Ascending aorta (tissue), 2 donors: ENCODE measurements at regions of chr4 and their contacts with region 1.

Region 1: DNA sequence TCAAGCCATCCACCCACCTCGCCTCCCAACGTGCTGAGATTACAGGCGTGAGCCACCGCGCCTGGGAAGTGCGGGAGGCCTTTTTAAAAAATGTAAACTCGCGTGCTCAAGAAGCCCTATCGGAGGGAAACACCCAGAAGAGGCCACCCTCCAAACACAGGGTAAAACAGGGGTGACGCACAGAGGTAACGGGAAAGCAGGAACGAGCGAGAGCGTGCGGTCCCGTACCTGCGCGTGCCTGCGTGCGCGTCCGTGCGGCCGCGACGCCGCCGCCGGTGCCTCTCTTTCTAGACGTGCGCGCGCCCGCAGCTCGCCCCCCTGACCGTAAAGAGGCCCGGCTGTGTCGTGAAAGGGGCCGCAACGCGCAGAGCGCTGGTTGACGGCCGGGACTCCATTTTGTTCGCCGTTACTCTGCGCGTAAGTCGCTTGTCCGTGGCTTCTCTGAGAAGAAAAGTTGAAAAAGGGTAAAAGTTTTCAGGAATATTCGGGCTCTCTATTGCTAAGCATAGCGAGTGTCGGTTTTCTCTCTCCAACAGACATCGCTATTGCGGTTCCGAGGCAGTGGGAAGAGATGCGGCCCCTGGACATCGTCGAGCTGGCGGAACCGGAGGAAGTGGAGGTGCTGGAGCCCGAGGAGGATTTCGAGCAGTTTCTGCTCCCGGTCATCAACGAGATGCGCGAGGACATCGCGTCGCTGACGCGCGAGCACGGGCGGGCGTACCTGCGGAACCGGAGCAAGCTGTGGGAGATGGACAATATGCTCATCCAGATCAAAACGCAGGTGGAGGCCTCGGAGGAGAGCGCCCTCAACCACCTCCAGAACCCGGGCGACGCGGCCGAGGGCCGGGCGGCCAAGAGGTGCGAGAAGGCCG is at the start of gene MRFAP1:
- DNase-seq: peak; percentile 77 to 97
- H3K4me3 ChIP-seq: peak within 1 kb of the TSS; percentile 76 to 89
- H3K27ac ChIP-seq: peak within 1 kb of the TSS; percentile 94 to 97
- H3K4me1 ChIP-seq: peaks cover 4 to 16% of the 10 kb centered on the region in 2 donors
- H3K27me3 ChIP-seq: no peaks in the 10 kb centered on the region
- CTCF ChIP-seq: no peak
- total RNA-seq, gene MRFAP1: 109 TPM

Region 2: DNA sequence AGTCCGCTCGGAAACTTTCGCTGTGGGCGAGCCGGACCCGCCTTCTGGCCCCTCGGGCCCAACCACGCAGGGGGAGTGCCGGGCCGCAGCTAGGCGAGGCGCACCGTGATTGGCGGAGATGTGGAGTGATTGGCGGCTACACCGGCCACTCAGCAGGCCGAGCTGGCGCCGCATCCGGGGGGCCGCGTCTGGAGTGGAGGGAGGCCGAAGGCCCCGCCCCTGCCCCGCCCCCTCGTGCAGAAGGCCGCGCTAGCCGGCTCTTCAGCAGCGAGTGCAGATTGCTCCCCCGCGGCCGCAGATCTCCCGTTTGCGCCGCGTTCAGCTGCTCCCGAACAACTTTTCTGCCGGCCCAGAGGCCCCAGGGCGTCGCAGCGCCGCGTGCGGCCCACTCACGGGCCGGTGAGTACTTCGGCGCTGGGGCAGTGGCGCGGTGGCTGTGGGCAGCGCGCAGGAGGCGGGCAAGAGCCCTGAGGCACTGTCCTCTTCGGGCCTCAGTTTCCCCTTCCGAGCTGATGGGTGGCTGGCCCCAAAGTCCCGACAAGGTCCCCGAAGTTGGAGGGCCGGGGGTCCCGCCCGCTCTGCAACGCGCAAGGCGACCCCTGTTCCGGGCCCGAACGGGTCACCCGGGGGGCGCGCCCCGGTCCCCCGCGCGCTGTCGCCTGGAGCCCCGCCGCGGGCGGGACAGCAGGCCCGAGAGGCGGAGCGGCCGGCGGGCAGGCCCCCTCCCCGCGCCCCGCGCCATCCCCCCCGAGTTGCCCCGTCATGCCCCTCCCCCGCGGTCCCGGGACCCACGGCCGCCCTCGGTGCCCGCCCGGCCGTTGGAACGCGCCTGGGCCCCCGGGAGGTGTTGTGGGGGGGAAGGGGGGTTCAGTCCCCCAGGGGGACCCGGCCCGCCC is 370.7 kb before region 1 on chr4 and contains the start of gene WFS1:
- intact Hi-C with region 1: loop called (anchors 2 kb)
- DNase-seq: peak; percentile 92 to 99
- H3K4me3 ChIP-seq: peak within 1 kb of the TSS; percentile 82 to 95
- H3K27ac ChIP-seq: peak within 1 kb of the TSS; percentile 87
- H3K4me1 ChIP-seq: peaks cover 25 to 38% of the 10 kb centered on the region in 2 donors
- H3K27me3 ChIP-seq: no peaks in the 10 kb centered on the region
- CTCF ChIP-seq: no peak
- total RNA-seq, gene WFS1: 166 TPM

Region 3: GRCh38 chr4:6663596-6664393 is 23.3 kb after region 1 on chr4:
- intact Hi-C with region 1: loop called (anchors 2 kb)
- DNase-seq: no peak
- H3K4me3 ChIP-seq: peak overlapping the region; percentile 57 to 72
- H3K27ac ChIP-seq: peak overlapping the region; percentile 40 to 44
- H3K4me1 ChIP-seq: peaks cover 4 to 6% of the 10 kb centered on the region in 2 donors
- H3K27me3 ChIP-seq: no peaks in the 10 kb centered on the region
- CTCF ChIP-seq: no peak

Region 4: GRCh38 chr4:6688879-6689505 is 48.5 kb after region 1 on chr4:
- intact Hi-C with region 1: no loop called
- DNase-seq: peak in 1 of 2 donors; percentile 73
- H3K4me3 ChIP-seq: no peak overlapping the region
- H3K27ac ChIP-seq: no peak overlapping the region
- H3K4me1 ChIP-seq: no peaks in the 10 kb centered on the region
- H3K27me3 ChIP-seq: no peaks in the 10 kb centered on the region
- CTCF ChIP-seq: no peak

Region 5: GRCh38 chr4:6709230-6710114 is 68.9 kb after region 1 on chr4 and contains the start of gene MRFAP1L1:
- intact Hi-C with region 1: loop called (anchors 1 kb)
- DNase-seq: peak; percentile 83 to 98
- H3K4me3 ChIP-seq: peak within 1 kb of the TSS; percentile 92 to 99
- H3K27ac ChIP-seq: peak within 1 kb of the TSS; percentile 83 to 85
- H3K4me1 ChIP-seq: peaks cover 0 to 28% of the 10 kb centered on the region in 2 donors
- H3K27me3 ChIP-seq: no peaks in the 10 kb centered on the region
- CTCF ChIP-seq: peak in 1 of 3 experiments; percentile 16
- total RNA-seq, gene MRFAP1L1: 34.1 TPM

Region 6: GRCh38 chr4:6783053-6783981 is 142.8 kb after region 1 on chr4:
- intact Hi-C with region 1: loop called (anchors 2 kb)
- DNase-seq: peak; percentile 60 to 94
- H3K4me3 ChIP-seq: peak overlapping the region; percentile 87 to 98
- H3K27ac ChIP-seq: peak overlapping the region; percentile 98 to 100
- H3K4me1 ChIP-seq: peaks cover 18 to 36% of the 10 kb centered on the region in 2 donors
- H3K27me3 ChIP-seq: no peaks in the 10 kb centered on the region
- CTCF ChIP-seq: peak in 2 of 3 experiments; percentile 9 to 28

Region 7: DNA sequence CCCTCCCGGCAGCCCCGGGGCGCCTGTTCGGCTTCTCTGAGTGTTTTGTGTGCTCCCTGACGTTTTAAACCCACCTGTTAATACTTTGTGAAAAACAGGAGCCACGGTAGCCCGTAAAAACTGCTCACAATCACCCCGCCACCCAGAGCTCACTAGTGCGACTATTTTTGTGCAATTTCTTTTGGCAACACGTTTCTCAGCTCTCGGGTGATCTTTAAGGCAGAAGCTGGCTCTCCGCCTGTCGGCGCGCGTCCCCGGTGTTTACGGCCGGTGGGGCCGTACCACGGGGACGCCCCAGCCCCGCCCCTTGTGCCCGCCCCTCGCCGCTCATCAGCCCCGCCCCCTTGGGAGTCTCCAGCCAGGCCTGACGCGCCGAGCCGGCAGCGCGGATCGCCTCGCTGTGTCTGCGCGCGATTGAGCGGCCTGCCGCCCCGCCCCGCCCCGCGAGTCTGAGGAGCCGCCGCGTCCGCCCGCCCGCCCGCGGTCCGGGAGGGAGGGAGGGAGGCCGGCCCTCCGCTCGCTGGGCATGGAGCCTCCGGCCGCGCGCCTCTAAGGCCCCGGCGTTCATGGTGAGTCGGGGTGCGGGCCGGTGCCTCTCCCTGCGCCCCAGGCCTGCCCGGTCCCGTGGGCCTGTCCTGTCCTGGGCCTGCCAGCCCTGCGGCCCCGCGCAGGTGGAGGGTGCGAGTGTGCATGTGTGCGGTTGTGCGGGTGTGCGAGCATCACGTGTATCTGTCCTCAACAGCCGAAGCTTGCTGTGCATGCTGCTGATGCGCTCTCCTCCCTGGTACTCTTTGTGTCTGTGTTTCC is 346.5 kb after region 1 on chr4:
- intact Hi-C with region 1: loop called (anchors 2 kb)
- DNase-seq: peak; percentile 75 to 96
- H3K4me3 ChIP-seq: peak overlapping the region; percentile 65 to 83
- H3K27ac ChIP-seq: peak overlapping the region; percentile 92
- H3K4me1 ChIP-seq: peaks cover 9 to 31% of the 10 kb centered on the region in 2 donors
- H3K27me3 ChIP-seq: no peaks in the 10 kb centered on the region
- CTCF ChIP-seq: no peak

Region 8: DNA sequence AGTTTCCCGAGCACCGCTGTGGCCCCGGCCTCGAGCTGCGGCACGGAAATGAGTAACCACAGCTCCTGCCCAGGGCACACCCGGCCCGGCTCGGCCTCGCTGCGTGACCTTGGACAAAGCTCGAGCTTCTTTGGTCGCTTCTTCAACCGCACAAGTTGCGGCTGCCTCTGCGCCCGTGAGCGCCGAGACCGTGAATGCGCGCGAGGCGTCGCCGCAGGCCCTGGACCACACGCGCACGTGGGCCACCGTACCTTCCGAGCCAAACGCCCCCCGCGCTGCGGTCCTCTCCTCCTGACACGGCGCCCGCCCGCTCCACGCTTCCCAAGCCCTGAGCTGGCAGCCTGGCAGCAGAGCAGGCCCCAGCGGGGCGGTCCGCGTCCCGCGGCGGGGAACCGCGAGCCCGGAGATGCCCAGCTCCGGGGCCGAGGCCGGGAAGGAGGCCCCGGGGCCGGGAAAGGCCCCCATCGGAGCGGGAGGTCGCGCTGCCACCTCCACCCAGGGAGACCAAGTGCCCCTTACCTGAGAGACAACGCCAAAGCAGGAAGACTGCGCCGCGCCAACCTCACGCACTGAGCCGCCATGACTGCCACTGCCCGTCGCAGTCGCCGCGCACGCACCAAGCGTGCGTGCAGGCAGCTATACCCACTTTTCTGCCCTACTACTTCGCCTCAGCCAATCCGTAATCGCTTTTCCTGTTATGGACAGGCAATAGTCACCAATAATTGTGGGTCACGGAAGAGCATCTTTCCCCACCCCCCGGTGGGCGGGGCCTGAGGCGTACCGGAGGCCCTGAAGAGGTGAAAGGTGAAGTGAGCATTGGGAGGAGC is 427.1 kb after region 1 on chr4 and contains the start of gene GRPEL1:
- intact Hi-C with region 1: loop called (anchors 5 kb)
- DNase-seq: peak; percentile 98 to 100
- H3K4me3 ChIP-seq: peak within 1 kb of the TSS; percentile 90 to 94
- H3K27ac ChIP-seq: peak within 1 kb of the TSS; percentile 86 to 95
- H3K4me1 ChIP-seq: peaks cover 10 to 18% of the 10 kb centered on the region in 2 donors
- H3K27me3 ChIP-seq: no peaks in the 10 kb centered on the region
- CTCF ChIP-seq: peak in 1 of 3 experiments; percentile 4
- total RNA-seq, gene GRPEL1: 42.5 TPM